A549 (cell line): ENCODE measurements at regions of chr17 and their contacts with region 1.

Region 1: GRCh38 chr17:74219576-74220133 is 6.3 kb downstream of the TTYH2 start:
- DNase-seq: no peak
- ATAC-seq: no peak
- H3K4me3 ChIP-seq: no peak overlapping the region
- H3K27ac ChIP-seq: no peak overlapping the region
- H3K4me1 ChIP-seq: no peaks in the 10 kb centered on the region
- CTCF ChIP-seq: no peak
- EP300 ChIP-seq: no peak
- POLR2A ChIP-seq: no peak
- RAD21 ChIP-seq: no peak

Region 2: DNA sequence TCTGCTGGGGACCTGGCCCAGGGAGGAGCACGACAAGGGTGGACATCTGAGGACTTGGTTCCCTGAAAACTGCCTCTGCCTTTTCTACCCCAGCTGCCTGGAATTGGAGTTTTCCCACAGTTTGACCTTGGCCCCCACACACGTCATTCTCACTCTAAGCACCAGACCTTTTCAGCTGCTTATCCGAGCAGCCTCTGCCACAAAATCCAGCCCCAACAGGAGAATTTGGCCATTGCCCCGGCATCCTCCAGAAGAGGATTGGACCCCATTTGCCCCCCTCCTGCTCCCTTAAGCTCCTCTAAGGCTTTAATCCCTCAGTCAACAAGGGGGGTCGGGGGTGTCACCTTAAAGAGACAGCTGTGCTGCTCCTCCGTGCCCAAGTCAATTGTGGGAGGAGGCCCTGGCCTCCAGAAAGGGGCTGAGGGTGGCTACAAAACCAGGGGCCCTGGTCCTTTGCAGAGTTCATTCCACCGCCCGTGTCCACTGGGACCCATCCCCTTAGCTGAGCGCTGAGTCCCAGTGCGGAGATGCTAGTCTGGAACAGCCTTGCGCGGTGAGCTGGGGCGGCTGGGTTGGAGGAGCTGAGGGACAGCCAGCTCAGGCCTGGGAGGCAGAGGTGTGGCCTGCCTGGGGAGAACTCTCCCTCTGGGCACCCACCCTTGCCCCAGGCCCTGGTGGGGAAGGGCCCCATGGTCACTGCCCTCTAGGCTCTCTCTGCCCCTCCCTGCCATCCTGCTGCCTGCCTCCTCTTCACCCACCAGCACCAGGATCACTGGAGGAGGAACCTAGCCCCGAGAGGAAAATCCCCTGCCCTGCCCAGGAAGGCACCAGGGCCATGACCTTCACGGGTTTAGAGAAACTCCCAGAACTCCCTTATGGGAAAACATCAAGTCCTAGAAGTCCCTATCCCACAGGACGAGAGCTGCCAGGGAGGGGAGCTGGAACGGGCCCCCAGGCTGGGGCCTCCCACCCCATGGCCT is 12.6 kb after region 1 on chr17:
- CTCF ChIA-PET with region 1: interaction called, 20 read pairs
- POLR2A ChIA-PET with region 1: no interaction called
- DNase-seq: no peak
- ATAC-seq: no peak
- H3K4me3 ChIP-seq: no peak overlapping the region
- H3K27ac ChIP-seq: no peak overlapping the region
- H3K4me1 ChIP-seq: 0 out of 3 replicates have a peak, but pooled peaks cover 6% of the 10 kb centered on the region
- CTCF ChIP-seq: no peak
- EP300 ChIP-seq: no peak
- POLR2A ChIP-seq: no peak
- RAD21 ChIP-seq: no peak